Activated T-helper 2 cell treated with anti-CD3 and anti-CD28 coated beads, Interferon-gamma antibody, Interleukin-2, Interleukin-4, amounts not matched to agents 10 μg/mL and 5 μg/mL and 100 μg/mL, durations not matched to agents 14 hours and 24 hours and 36 hours (primary cell): ENCODE measurements at regions of chr10 and their contacts with region 1.

Region 1: GRCh38 chr10:110304780-110305421 is at the start of gene SMNDC1:
- DNase-seq: peak; percentile 97
- H3K4me3 Mint-ChIP-seq: peak within 1 kb of the TSS; percentile 93
- H3K27ac Mint-ChIP-seq: peak within 1 kb of the TSS; percentile 94
- H3K4me1 Mint-ChIP-seq: peaks cover 37% of the 10 kb centered on the region
- H3K27me3 Mint-ChIP-seq: no peaks in the 10 kb centered on the region
- total RNA-seq, gene SMNDC1: 40.2 and 43.1 TPM in 2 replicates

Region 2: GRCh38 chr10:110460111-110460809 is 155.4 kb after region 1 on chr10:
- intact Hi-C with region 1: no loop called
- DNase-seq: no peak
- H3K4me3 Mint-ChIP-seq: no peak overlapping the region
- H3K27ac Mint-ChIP-seq: no peak overlapping the region
- H3K4me1 Mint-ChIP-seq: peaks cover 46% of the 10 kb centered on the region
- H3K27me3 Mint-ChIP-seq: no peaks in the 10 kb centered on the region

Region 3: GRCh38 chr10:110547139-110547761 is 242.3 kb after region 1 on chr10:
- intact Hi-C with region 1: loop called (anchors 1 kb)
- DNase-seq: no peak
- H3K4me3 Mint-ChIP-seq: no peak overlapping the region
- H3K27ac Mint-ChIP-seq: no peak overlapping the region
- H3K4me1 Mint-ChIP-seq: peaks cover 12% of the 10 kb centered on the region
- H3K27me3 Mint-ChIP-seq: peaks cover 28% of the 10 kb centered on the region

Region 4: DNA sequence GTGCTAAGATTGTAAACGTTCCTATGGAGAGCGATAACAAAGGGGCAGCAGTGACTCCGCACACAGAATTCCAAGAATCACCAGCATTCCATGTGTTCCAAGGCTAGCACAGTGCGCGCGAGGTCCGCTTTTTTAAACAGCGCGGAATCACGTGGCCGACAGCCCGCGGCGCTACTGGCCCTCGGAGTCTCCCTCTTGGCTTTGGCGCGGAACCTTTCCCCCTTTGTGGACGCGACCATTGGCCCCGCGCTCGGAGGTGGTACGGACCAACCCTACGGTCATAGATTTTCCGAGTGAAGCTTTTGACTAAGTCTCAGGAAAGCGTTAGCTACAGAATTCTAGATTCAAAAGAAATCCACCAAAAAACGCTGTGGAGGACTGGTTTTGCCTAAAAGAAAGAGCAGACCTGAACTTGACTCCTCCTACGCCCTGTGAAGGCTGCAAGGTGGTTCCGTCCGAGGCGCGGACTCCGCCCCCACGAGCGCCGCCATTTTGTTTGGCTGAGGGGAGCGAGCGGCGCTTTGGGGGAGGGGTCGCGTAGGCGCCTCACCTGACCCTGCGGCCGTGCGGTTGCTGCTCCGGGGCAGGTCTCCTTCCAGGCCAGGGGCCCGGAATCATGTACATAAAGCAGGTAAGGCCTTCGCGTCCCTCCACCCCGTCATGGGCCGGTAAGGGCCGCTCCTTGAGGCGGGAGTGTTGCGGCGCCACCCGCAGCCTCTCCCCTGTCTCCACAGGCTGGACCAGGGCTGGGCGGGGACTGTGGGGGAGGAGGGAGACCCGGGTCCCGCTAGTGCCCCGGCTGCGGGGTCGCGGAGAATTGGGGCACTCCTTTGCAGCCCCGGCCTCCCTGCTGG is 262.5 kb after region 1 on chr10 and contains the start of gene SMC3:
- intact Hi-C with region 1: loop called (anchors 1 kb)
- DNase-seq: peak; percentile 90
- H3K4me3 Mint-ChIP-seq: peak within 1 kb of the TSS; percentile 90
- H3K27ac Mint-ChIP-seq: peak within 1 kb of the TSS; percentile 98
- H3K4me1 Mint-ChIP-seq: peaks cover 51% of the 10 kb centered on the region
- H3K27me3 Mint-ChIP-seq: peaks cover 9% of the 10 kb centered on the region
- total RNA-seq, gene SMC3: 78.4 and 78.8 TPM in 2 replicates

Region 5: GRCh38 chr10:110600487-110601101 is 295.7 kb after region 1 on chr10:
- intact Hi-C with region 1: loop called (anchors 1 kb)
- DNase-seq: no peak
- H3K4me3 Mint-ChIP-seq: no peak overlapping the region
- H3K27ac Mint-ChIP-seq: no peak overlapping the region
- H3K4me1 Mint-ChIP-seq: no peaks in the 10 kb centered on the region
- H3K27me3 Mint-ChIP-seq: no peaks in the 10 kb centered on the region

Region 6: DNA sequence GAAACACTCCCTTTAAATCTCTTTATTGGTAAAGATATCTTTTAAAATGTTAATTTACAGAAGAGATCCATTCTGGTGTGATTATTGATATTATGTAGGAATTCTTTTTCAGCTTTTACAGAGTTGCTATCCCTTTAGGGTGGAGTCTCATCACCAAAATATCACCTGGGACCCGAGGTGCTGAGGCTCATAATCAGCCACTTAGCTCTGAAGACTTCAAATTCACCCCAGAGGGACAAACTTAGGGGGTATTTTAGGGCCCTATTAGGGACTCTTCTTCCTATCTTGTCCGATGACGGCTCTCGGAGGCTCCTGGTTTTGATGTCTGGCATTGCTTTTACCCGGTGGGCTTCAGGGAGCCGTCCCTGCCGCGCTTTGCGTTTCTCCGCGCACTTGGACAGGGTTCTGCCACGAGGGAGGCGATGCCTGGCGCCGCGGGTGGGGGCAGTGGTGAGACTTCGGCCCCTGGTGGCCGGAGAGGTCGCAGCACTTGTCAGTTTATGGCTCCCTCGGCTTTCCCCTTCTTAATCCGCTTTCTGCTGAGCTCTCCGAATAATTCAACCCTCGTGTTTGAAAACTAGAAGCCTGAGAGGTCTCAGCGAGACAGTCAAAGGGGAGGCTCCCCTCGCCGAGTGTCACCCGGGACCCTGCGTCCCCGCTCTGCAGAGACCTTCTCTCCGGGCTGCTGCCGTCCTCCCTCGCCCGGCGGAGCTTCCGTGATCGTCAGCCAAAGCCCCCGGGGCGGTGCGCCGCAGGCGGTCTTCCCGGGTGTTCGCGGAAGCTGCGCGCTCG is 367.1 kb after region 1 on chr10:
- intact Hi-C with region 1: loop called (anchors 2 kb)
- DNase-seq: peak; percentile 51
- H3K4me3 Mint-ChIP-seq: peak overlapping the region; percentile 84
- H3K27ac Mint-ChIP-seq: no peak overlapping the region
- H3K4me1 Mint-ChIP-seq: peaks cover 2% of the 10 kb centered on the region
- H3K27me3 Mint-ChIP-seq: peaks cover 51% of the 10 kb centered on the region

Region 7: GRCh38 chr10:110681023-110681681 is 376.3 kb after region 1 on chr10:
- intact Hi-C with region 1: loop called (anchors 1 kb)
- DNase-seq: no peak
- H3K4me3 Mint-ChIP-seq: no peak overlapping the region
- H3K27ac Mint-ChIP-seq: no peak overlapping the region
- H3K4me1 Mint-ChIP-seq: peaks cover 3% of the 10 kb centered on the region
- H3K27me3 Mint-ChIP-seq: peaks cover 42% of the 10 kb centered on the region

Region 8: DNA sequence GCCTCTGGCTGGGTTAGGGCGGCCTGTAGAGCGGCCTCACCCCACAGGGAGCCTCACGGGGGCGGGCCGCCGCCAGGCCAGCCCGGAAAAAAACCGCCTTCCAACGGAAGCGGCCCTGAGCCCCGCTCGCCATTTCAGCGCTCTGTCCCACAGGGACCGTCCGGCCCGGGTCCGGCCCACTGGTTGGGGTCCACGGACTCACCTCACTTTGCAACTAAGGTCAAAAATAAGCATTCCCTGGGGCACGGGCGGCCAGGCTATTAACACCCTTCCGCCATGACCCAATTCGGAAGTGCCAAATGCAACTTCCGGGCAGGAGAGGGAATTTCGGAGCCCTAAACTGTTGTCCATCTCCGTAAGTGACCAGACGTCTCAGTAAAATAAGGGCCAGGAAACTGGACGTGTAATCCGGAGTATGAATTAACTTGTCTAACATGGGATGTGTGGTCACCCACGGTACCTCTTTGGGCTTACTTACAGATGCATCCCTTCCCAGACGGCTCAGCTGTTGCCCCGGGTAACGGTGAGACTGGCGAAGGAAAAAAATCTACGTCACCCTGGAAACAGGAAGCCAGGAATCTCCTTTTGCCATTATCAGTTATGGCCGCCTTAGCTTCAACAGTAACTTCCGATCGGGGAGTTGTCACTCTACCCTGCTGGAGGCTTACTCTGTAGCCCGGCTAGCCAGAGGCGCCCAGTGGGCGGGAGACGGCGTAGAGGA is 613.9 kb after region 1 on chr10 and contains the start of gene BBIP1:
- intact Hi-C with region 1: loop called (anchors 5 kb)
- DNase-seq: no peak
- H3K4me3 Mint-ChIP-seq: peak within 1 kb of the TSS; percentile 94
- H3K27ac Mint-ChIP-seq: peak within 1 kb of the TSS; percentile 93
- H3K4me1 Mint-ChIP-seq: peaks cover 39% of the 10 kb centered on the region
- H3K27me3 Mint-ChIP-seq: no peaks in the 10 kb centered on the region
- total RNA-seq, gene BBIP1: 31.5 and 32.7 TPM in 2 replicates